ENCODE measurements at regions of chr21 and their contacts with region 1.

Region 1: GRCh38 chr21:44792702-44793591 is 8.7 kb downstream of the UBE2G2 start:
- DNase-seq: peak; percentile 79
- H3K4me3 ChIP-seq: no peak overlapping the region
- H3K27ac ChIP-seq: no peak overlapping the region
- H3K4me1 ChIP-seq: peaks cover 11% of the 10 kb centered on the region
- H3K27me3 ChIP-seq: no peaks in the 10 kb centered on the region

Region 2: GRCh38 chr21:44510508-44511210 is 282.3 kb before region 1 on chr21:
- in situ Hi-C with region 1: loop called (anchors 10 kb)
- DNase-seq: peak; percentile 62
- H3K4me3 ChIP-seq: no peak overlapping the region
- H3K27ac ChIP-seq: no peak overlapping the region
- H3K4me1 ChIP-seq: no peaks in the 10 kb centered on the region
- H3K27me3 ChIP-seq: 0 out of 2 replicates have a peak, but pooled peaks cover 14% of the 10 kb centered on the region